ENCODE measurements at regions of chrX and their contacts with region 1.

Region 1: DNA sequence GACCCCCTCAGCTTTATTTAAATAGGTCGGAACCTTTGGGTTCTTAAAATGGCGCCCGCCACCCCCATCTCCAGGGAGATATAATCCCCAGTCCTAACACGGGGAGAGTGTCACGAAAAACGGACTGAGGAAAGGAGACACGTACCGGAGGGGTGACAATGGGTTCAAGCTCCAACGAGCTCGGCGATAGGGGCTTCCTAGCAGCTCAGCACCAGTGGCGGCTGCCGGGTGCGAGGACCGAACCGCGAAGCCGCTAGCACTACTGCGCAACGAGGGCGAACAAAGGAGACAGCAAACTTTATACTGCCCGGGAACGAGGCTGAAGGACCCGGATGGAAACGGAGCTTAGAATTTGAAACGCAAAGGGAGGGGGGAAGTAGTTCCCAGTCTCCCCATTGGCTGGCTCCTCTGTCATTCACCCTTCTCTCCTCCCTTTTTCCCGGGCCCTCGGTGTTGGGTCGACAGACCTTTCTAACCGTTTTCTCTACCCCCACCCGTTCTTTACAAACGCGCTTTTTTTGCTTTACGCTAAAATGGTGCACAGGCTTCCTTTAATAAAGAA is at the start of gene RBMX:
- DNase-seq: peak; percentile 70
- ATAC-seq: peak; percentile 87
- H3K4me3 Mint-ChIP-seq: peak within 1 kb of the TSS; percentile 93
- H3K27ac Mint-ChIP-seq: peak within 1 kb of the TSS; percentile 98
- H3K4me1 Mint-ChIP-seq: peaks cover 9% of the 10 kb centered on the region
- H3K27me3 Mint-ChIP-seq: no peaks in the 10 kb centered on the region
- CTCF ChIP-seq: no peak
- total RNA-seq, gene RBMX: 259 and 260 TPM in 2 replicates

Region 2: GRCh38 chrX:136496770-136497598 is 383.5 kb before region 1 on chrX and contains the start of gene HTATSF1:
- CTCF ChIA-PET with region 1: no interaction called
- POLR2A ChIA-PET with region 1: interaction called, 4 read pairs
- intact Hi-C with region 1: loop called (anchors 1 kb)
- DNase-seq: peak; percentile 79
- ATAC-seq: peak; percentile 81
- H3K4me3 Mint-ChIP-seq: peak within 1 kb of the TSS; percentile 89
- H3K27ac Mint-ChIP-seq: peak within 1 kb of the TSS; percentile 97
- H3K4me1 Mint-ChIP-seq: peaks cover 22% of the 10 kb centered on the region
- H3K27me3 Mint-ChIP-seq: no peaks in the 10 kb centered on the region
- CTCF ChIP-seq: no peak
- total RNA-seq, gene HTATSF1: 23.9 and 24.5 TPM in 2 replicates

Region 3: DNA sequence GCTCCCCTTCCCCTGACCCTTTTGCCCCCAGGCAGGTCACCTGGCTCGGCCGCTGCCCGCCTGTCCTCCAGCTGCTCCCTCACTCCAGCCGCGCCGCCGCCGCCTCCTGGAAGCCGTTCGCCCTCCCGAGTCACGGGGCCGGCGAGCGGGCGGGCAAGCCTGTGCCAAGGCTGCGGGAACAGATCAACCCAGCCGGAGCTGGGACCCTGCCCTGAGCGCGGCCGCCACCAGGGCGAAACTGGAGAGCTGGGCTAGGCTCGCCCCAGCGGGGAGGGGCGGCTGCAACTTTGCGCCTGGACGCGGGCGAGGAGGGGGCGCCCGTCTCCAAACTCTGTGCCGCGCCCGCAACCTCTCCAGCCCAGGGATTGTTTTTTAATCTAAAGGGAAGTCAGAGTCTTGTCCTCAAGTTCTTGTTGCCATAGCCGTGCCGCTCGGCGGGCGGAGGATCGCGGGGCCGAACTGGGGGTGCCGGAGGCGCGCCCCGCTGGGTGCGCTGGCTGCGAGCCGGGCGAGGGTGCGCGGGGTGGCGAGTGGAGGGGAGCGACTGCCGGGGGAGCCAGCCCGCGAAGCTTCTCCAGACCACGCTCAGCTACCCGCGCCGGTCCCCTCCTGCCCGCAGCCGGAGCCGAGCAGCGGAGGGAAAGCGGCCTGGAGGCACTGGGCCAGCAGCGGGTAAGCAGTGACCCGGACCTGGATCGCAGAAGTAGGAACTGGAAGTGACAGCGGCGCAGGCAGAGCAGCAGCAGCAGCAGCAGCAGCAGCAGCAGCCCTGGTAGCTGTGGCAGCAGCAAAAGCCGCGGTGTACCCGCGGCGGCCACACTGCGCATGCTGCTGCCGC is 113.2 kb before region 1 on chrX:
- CTCF ChIA-PET with region 1: interaction called, 3 read pairs
- POLR2A ChIA-PET with region 1: interaction called, 46 read pairs
- intact Hi-C with region 1: loop called (anchors 5 kb)
- DNase-seq: peak; percentile 46
- ATAC-seq: peak; percentile 80
- H3K4me3 Mint-ChIP-seq: peak overlapping the region; percentile 78
- H3K27ac Mint-ChIP-seq: peak overlapping the region; percentile 87
- H3K4me1 Mint-ChIP-seq: peaks cover 49% of the 10 kb centered on the region
- H3K27me3 Mint-ChIP-seq: no peaks in the 10 kb centered on the region
- CTCF ChIP-seq: no peak

Region 4: DNA sequence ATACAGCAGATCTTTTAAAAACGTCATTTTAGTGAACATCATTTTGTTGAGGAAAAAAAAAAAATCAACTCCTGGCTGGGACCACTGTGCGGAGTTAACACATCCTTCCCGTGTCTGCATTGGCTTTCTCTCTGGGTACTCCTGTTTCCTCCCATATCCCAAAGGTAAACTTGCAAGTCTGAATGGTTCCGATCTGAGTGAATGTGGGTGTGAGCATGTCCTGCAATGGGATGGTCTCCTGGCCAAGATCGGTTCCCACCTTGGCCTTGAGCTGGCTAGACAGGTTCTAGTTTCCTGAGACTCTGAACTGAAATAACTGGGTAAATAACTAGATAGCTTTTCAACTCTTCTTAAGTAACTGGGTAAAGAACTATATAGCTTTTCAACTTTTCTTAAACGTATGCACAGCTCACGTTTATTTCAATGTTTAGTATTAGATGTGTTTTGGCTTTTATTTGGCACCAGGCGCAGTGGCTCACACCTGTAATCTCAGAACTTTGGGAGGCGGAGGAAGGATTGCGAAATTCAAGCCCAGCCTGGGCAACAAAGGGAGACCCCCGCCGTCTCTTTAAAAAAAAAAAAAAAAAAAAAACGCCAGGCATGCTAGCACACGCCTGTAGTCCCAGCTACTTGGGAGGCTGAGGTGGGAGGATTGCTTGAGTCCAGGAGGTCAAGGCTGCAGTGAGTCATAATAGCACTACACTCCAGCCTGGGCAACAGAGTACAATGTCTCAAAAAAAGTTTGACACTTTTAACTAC is 14.0 kb before region 1 on chrX:
- CTCF ChIA-PET with region 1: no interaction called
- POLR2A ChIA-PET with region 1: interaction called, 24 read pairs
- intact Hi-C with region 1: no loop called
- DNase-seq: no peak
- ATAC-seq: no peak
- H3K4me3 Mint-ChIP-seq: no peak overlapping the region
- H3K27ac Mint-ChIP-seq: peak overlapping the region; percentile 24
- H3K4me1 Mint-ChIP-seq: peaks cover 21% of the 10 kb centered on the region
- H3K27me3 Mint-ChIP-seq: no peaks in the 10 kb centered on the region
- CTCF ChIP-seq: no peak

Region 5: GRCh38 chrX:136920001-136920400 is 39.5 kb after region 1 on chrX:
- CTCF ChIA-PET with region 1: no interaction called
- POLR2A ChIA-PET with region 1: no interaction called
- intact Hi-C with region 1: loop called (anchors 1 kb)
- DNase-seq: no peak
- ATAC-seq: no peak
- H3K4me3 Mint-ChIP-seq: no peak overlapping the region
- H3K27ac Mint-ChIP-seq: no peak overlapping the region
- H3K4me1 Mint-ChIP-seq: peaks cover 1% of the 10 kb centered on the region
- H3K27me3 Mint-ChIP-seq: no peaks in the 10 kb centered on the region
- CTCF ChIP-seq: no peak

Measured in activated B cell treated with CpG ODN at 0.5 μM for 24 hours (primary cell).